HEK293 (cell line): ENCODE measurements at regions of chr18 and their contacts with region 1.

Region 1: GRCh38 chr18:43606795-43607194 is 329.5 kb upstream of the SYT4 start:
- H3K4me3 ChIP-seq: no peak overlapping the region
- H3K27ac ChIP-seq: no peak overlapping the region
- H3K4me1 ChIP-seq: no peaks in the 10 kb centered on the region
- CTCF ChIP-seq: no peak

Region 2: DNA sequence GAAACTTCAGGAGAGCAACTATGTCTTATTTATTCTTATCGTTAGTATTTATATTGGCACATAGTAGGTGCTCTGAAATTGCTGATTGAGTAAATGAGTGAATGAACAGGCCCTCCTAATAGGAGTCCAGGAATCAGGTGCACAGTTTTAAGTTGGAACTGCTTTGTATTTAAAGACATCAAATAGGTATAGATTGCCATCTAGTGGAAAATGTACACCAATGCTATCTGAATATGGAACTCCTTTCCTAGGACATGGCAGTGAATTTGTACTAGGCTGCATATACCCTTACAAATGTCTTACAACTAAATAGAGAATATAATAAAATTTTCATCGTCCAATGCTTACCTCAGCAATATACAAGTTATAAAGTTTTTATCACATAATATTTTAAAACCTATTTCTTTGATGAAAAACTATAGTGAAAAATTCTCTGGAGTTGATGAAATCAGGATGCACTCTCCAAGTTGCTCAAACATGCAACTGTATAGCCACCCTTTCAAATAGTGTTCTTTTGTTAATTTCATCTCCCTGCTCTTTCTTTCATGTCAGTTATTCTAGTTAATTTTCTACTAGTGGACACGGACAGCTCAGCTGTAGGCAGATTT is 10.6 kb before region 1 on chr18:
- CTCF ChIA-PET with region 1: interaction called, 10 read pairs
- POLR2A ChIA-PET with region 1: no interaction called
- H3K4me3 ChIP-seq: no peak overlapping the region
- H3K27ac ChIP-seq: no peak overlapping the region
- H3K4me1 ChIP-seq: no peaks in the 10 kb centered on the region
- CTCF ChIP-seq: no peak